ENCODE measurements at regions of chr2 and their contacts with region 1.

Region 1: DNA sequence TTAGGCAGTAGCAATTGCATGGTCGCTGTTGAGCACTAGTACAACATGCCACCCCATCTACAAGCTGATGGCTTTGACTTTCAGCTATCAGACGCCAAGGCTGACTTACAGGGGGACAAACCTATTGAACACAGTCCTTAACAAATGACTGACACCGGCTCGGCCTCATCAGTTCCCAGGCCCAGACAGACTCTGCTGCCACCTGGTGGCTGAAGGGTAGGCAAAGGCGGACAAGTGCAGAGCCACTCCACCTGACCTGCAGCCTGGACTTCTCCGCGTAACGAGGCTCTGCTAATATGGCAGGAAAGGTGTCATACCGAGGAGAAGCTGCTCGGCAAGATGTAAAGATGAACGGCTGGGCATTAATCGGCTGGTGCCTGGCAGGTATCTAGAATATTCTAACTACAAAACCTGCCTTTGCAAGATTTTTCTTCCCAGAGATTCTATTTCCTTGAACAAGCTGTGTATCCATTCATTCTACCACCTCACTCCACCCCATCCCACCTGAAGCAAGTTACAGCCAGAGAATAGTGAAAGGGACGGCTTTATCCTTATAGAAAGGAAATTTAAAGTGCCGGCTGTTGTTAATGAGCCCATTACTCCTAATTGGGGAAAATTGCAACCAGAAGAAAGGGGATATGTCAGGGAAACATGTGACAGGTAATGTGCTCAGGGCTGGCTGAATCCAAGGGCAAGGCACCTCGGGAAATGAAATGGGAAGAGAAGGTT is 67.4 kb downstream of the STEAP3 start:
- DNase-seq: peak; percentile 61
- ATAC-seq: peak; percentile 92
- H3K4me3 ChIP-seq: no peak overlapping the region
- H3K27ac ChIP-seq: no peak overlapping the region
- H3K4me1 ChIP-seq: no peaks in the 10 kb centered on the region
- H3K27me3 ChIP-seq: no peaks in the 10 kb centered on the region; the same call in 1 of the 2 replicates
- CTCF ChIP-seq: peak; percentile 90
- POLR2A ChIP-seq: no peak
- RAD21 ChIP-seq: peak; percentile 95

Region 2: DNA sequence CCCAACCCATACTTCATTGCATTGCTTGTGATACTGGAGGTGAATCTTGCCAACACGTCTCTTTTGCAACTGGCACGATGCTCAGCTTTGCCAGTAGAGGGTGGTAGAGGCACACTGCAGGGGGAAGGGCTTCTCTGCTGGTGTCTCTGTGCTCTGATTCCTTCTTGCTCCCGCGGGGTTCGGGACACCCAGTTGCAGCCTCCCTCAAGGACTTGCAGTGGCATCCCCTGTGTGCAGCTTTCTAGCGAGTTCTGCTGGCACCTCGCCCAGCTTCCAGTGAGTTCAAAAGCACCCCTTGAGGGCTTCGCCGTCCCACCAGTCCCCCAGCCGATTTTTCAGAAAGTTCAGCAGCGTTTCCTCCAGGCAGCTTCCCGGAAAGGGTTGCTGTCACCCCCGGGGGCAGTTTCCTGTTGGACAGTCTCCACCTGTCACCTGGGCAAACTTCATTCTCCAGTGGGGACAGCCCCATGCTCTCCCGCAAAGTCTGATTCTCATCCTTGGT is 408.3 kb before region 1 on chr2:
- CTCF ChIA-PET with region 1: interaction called, 3 read pairs
- POLR2A ChIA-PET with region 1: no interaction called
- dilution Hi-C with region 1: no loop called
- in situ Hi-C with region 1: loop called (anchors 5 kb)
- intact Hi-C with region 1: loop called (anchors 1 kb)
- DNase-seq: peak; percentile 38
- ATAC-seq: peak; percentile 86
- H3K4me3 ChIP-seq: no peak overlapping the region
- H3K27ac ChIP-seq: no peak overlapping the region
- H3K4me1 ChIP-seq: no peaks in the 10 kb centered on the region
- H3K27me3 ChIP-seq: no peaks in the 10 kb centered on the region; the same call in 1 of the 2 replicates
- CTCF ChIP-seq: peak; percentile 72
- POLR2A ChIP-seq: no peak
- RAD21 ChIP-seq: peak; percentile 64

Region 3: GRCh38 chr2:119011162-119011909 is 279.7 kb before region 1 on chr2:
- CTCF ChIA-PET with region 1: interaction called, 8 read pairs
- POLR2A ChIA-PET with region 1: no interaction called
- dilution Hi-C with region 1: no loop called
- in situ Hi-C with region 1: no loop called
- intact Hi-C with region 1: loop called (anchors 1 kb)
- DNase-seq: peak; percentile 5
- ATAC-seq: peak; percentile 99
- H3K4me3 ChIP-seq: no peak overlapping the region
- H3K27ac ChIP-seq: no peak overlapping the region
- H3K4me1 ChIP-seq: no peaks in the 10 kb centered on the region
- H3K27me3 ChIP-seq: peaks cover 5% of the 10 kb centered on the region
- CTCF ChIP-seq: peak; percentile 67
- POLR2A ChIP-seq: no peak
- RAD21 ChIP-seq: peak; percentile 82

Region 4: DNA sequence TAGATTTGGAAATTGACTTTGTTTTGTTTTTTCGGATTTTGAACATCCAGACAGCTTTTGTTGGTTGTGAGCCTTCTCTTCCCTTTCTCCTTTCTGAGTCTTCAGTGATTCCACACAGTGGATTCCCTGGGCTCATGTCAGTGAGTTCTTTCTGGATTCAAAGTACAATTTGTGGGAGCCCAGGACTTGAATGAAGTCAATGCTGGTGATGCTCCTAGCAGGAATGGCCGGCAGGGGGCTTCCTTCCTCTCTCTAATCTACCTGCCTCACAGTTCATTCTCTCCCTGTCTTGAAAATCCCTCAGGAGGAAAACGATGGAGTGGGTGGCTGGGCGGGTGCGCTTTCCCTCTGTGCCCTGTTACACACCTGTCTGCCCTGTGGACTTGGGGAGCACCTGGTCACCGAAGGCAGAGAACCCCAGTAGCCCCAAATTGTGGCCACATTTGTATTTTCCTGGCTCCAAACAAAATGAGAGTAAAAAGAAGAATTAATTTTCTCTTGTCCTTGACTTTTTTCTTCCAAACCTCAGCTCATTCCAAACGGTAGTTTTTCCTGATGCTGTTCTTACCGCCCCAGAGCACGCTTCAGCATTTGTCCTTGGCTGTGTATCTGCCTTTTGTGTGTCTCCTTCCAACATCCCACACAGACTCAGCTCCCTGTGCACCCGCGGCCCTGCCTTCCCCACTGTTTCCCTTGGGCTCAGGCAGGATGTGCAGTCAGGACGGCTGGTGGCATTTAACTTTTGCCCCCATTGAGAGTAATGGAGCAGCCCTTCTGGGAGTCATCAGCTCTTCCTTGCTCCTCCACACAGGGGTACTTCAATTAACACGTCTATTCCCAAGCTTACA is 262.5 kb before region 1 on chr2:
- CTCF ChIA-PET with region 1: interaction called, 3 read pairs
- POLR2A ChIA-PET with region 1: no interaction called
- dilution Hi-C with region 1: no loop called
- in situ Hi-C with region 1: loop called (anchors 10 kb)
- intact Hi-C with region 1: loop called (anchors 1 kb)
- DNase-seq: peak; percentile 25
- ATAC-seq: peak; percentile 44; the same call in 1 of the 2 replicates
- H3K4me3 ChIP-seq: no peak overlapping the region
- H3K27ac ChIP-seq: no peak overlapping the region
- H3K4me1 ChIP-seq: no peaks in the 10 kb centered on the region
- H3K27me3 ChIP-seq: no peaks in the 10 kb centered on the region
- CTCF ChIP-seq: peak; percentile 58
- POLR2A ChIP-seq: no peak
- RAD21 ChIP-seq: peak; percentile 57

Region 5: DNA sequence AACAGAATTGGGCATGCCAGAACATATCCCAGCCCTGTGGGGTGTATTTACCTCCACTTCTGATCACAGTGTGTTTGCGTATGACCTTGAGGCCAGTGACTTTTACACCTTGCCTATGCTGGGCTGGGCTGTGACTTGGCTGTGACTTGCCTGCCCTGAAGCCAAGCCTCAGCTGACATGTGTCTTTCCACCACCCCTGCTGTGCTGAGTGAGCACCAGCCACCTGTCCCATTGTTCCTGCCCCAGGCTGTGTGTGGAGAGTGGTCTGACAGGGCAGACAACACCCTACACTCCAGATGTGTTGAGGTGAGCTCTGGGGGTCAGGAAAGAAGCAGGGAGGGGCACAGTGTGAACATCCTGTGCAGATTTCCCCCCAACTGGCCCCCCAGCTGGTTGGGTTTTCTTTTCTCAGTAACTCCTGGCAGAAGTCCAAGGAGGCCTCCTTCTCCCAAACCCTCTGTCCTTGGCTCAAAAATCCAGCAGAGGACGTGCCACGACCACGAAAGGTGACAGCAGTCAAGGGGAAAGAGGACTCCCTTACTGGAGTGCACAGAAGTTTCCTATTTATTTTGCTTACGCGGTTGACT is 72.5 kb before region 1 on chr2:
- CTCF ChIA-PET with region 1: interaction called, 4 read pairs
- POLR2A ChIA-PET with region 1: no interaction called
- dilution Hi-C with region 1: no loop called
- in situ Hi-C with region 1: no loop called
- intact Hi-C with region 1: loop called (anchors 1 kb)
- DNase-seq: peak; percentile 74
- ATAC-seq: no peak
- H3K4me3 ChIP-seq: no peak overlapping the region
- H3K27ac ChIP-seq: no peak overlapping the region
- H3K4me1 ChIP-seq: peaks cover 3% of the 10 kb centered on the region; the same call in 1 of the 2 replicates
- H3K27me3 ChIP-seq: peaks cover 3% of the 10 kb centered on the region
- CTCF ChIP-seq: peak; percentile 75
- POLR2A ChIP-seq: no peak
- RAD21 ChIP-seq: peak; percentile 92

Region 6: GRCh38 chr2:119231975-119232665 is 58.9 kb before region 1 on chr2:
- CTCF ChIA-PET with region 1: no interaction called
- POLR2A ChIA-PET with region 1: no interaction called
- dilution Hi-C with region 1: no loop called
- in situ Hi-C with region 1: no loop called
- intact Hi-C with region 1: no loop called
- DNase-seq: peak; percentile 74
- ATAC-seq: peak; percentile 32
- H3K4me3 ChIP-seq: no peak overlapping the region
- H3K27ac ChIP-seq: peak overlapping the region; percentile 73
- H3K4me1 ChIP-seq: peaks cover 29% of the 10 kb centered on the region
- H3K27me3 ChIP-seq: no peaks in the 10 kb centered on the region
- CTCF ChIP-seq: no peak
- POLR2A ChIP-seq: no peak
- RAD21 ChIP-seq: no peak

Region 7: GRCh38 chr2:119301413-119301812 is 10.4 kb after region 1 on chr2:
- CTCF ChIA-PET with region 1: interaction called, 12 read pairs
- POLR2A ChIA-PET with region 1: no interaction called
- dilution Hi-C with region 1: no loop called
- in situ Hi-C with region 1: no loop called
- intact Hi-C with region 1: no loop called
- DNase-seq: peak; percentile 36
- ATAC-seq: no peak
- H3K4me3 ChIP-seq: no peak overlapping the region
- H3K27ac ChIP-seq: no peak overlapping the region
- H3K4me1 ChIP-seq: no peaks in the 10 kb centered on the region
- H3K27me3 ChIP-seq: no peaks in the 10 kb centered on the region
- CTCF ChIP-seq: no peak
- POLR2A ChIP-seq: no peak
- RAD21 ChIP-seq: no peak

Region 8: GRCh38 chr2:119387381-119388129 is 96.5 kb after region 1 on chr2:
- CTCF ChIA-PET with region 1: no interaction called
- POLR2A ChIA-PET with region 1: no interaction called
- dilution Hi-C with region 1: no loop called
- in situ Hi-C with region 1: no loop called
- intact Hi-C with region 1: no loop called
- DNase-seq: peak; percentile 20
- ATAC-seq: peak; percentile 56
- H3K4me3 ChIP-seq: no peak overlapping the region
- H3K27ac ChIP-seq: no peak overlapping the region
- H3K4me1 ChIP-seq: no peaks in the 10 kb centered on the region
- H3K27me3 ChIP-seq: peaks cover 5% of the 10 kb centered on the region
- CTCF ChIP-seq: no peak
- POLR2A ChIP-seq: no peak
- RAD21 ChIP-seq: no peak

Region 9: GRCh38 chr2:119647440-119648169 is 356.6 kb after region 1 on chr2:
- CTCF ChIA-PET with region 1: no interaction called
- POLR2A ChIA-PET with region 1: no interaction called
- dilution Hi-C with region 1: no loop called
- in situ Hi-C with region 1: no loop called
- intact Hi-C with region 1: no loop called
- DNase-seq: peak; percentile 61
- ATAC-seq: no peak
- H3K4me3 ChIP-seq: no peak overlapping the region
- H3K27ac ChIP-seq: no peak overlapping the region
- H3K4me1 ChIP-seq: 0 out of 2 replicates have a peak, but pooled peaks cover 1% of the 10 kb centered on the region
- H3K27me3 ChIP-seq: peaks cover 3% of the 10 kb centered on the region; the same call in 1 of the 2 replicates
- CTCF ChIP-seq: no peak
- POLR2A ChIP-seq: no peak
- RAD21 ChIP-seq: no peak